Activated CD8-positive, alpha-beta T cell treated with anti-CD3 and anti-CD28 coated beads, Interleukin-2, amount 10 ng/mL, durations not matched to agents 7 days and 5 days (primary cell): ENCODE measurements at regions of chr17 and their contacts with region 1.

Region 1: GRCh38 chr17:64025732-64026294 is 5.4 kb upstream of the ICAM2 start:
- DNase-seq: peak; percentile 96
- ATAC-seq: peak; percentile 89
- H3K4me3 Mint-ChIP-seq: peak overlapping the region; percentile 63
- H3K27ac Mint-ChIP-seq: peak overlapping the region; percentile 86
- H3K4me1 Mint-ChIP-seq: peaks cover 69% of the 10 kb centered on the region
- H3K27me3 Mint-ChIP-seq: no peaks in the 10 kb centered on the region

Region 2: DNA sequence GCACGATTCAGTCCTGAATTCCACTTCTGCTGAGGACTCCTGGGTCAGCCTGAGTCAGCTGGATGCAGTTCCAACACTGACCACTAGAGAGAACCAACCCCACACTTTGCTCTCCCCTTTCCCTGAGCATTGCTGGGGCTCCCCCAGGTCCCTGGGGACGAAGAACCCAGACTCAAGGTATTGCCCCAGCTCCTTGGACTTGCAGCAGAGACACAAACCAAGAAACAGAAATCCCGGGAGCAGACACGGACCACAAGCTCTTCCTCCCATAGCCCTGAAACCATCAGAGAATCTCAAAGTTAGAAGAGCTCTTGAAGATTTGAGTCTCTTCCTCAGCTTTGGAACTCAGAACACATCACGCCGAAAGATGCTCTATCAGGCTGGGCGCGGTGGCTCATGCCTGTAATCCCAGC is 106.5 kb before region 1 on chr17:
- CTCF ChIA-PET with region 1: interaction called, 114 read pairs
- POLR2A ChIA-PET with region 1: no interaction called
- DNase-seq: peak; percentile 79
- ATAC-seq: peak; percentile 93
- H3K4me3 Mint-ChIP-seq: no peak overlapping the region
- H3K27ac Mint-ChIP-seq: peak overlapping the region; percentile 47
- H3K4me1 Mint-ChIP-seq: peaks cover 8% of the 10 kb centered on the region
- H3K27me3 Mint-ChIP-seq: peaks cover 16% of the 10 kb centered on the region

Region 3: DNA sequence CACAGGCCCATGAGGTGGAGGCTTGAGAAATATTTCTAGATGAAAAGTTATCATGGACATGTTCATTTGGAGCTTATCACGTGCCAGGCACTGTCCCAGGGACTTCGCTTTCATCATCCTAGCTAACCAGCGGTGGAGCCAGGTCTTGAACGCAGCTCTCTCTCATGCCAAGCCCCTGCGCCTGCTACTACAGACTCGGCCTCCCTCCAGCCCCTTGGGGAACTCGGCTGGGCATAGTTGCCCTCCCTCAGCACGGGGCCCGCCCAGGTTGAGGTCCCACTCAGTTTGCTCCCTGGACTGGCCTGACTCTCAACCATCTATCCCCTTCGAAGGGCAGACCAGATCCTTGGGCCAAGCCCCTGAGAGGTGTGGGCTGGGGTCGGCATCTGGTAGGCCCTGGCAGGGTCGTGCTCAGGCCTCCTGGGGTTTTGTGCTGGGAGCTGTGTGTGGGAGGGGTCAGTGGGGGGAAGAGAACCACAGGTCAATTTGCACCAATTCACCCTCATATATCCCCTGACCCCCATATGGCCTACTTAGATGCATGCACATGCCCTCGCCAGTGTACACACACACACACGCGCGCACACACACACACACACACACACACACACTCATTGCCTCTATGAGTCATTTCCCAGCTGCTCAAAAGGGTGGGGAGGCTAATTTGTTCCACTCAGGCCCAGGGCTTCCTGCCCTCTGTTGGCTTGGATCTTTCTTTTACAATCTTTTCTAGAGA is 41.0 kb before region 1 on chr17:
- CTCF ChIA-PET with region 1: interaction called, 31 read pairs
- POLR2A ChIA-PET with region 1: interaction called, 4 read pairs
- DNase-seq: peak; percentile 84
- ATAC-seq: peak; percentile 84
- H3K4me3 Mint-ChIP-seq: no peak overlapping the region
- H3K27ac Mint-ChIP-seq: peak overlapping the region; percentile 66
- H3K4me1 Mint-ChIP-seq: peaks cover 23% of the 10 kb centered on the region
- H3K27me3 Mint-ChIP-seq: peaks cover 2% of the 10 kb centered on the region

Region 4: DNA sequence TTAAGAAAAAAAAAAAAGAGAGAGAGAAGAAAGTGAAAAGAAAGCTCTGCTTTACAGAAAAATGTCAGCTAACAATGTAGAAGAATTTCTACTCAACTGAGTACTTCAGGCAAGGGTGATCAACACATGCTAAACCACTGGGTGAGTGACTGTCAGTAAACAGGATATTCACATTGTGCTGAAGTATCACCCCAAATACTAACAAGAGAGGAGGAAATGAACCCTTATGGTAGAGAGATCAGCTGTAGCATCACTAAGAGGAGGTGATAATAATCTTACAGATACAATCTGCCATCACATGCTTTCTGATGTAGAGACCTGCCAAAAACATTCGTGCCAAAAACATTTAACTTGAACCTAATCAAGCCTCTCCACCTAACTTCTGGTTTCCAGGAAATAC is 25.3 kb after region 1 on chr17:
- CTCF ChIA-PET with region 1: interaction called, 30 read pairs
- POLR2A ChIA-PET with region 1: interaction called, 4 read pairs
- DNase-seq: peak; percentile 48
- ATAC-seq: peak; percentile 96
- H3K4me3 Mint-ChIP-seq: peak overlapping the region; percentile 18
- H3K27ac Mint-ChIP-seq: peak overlapping the region; percentile 82
- H3K4me1 Mint-ChIP-seq: peaks cover 37% of the 10 kb centered on the region
- H3K27me3 Mint-ChIP-seq: no peaks in the 10 kb centered on the region

Region 5: DNA sequence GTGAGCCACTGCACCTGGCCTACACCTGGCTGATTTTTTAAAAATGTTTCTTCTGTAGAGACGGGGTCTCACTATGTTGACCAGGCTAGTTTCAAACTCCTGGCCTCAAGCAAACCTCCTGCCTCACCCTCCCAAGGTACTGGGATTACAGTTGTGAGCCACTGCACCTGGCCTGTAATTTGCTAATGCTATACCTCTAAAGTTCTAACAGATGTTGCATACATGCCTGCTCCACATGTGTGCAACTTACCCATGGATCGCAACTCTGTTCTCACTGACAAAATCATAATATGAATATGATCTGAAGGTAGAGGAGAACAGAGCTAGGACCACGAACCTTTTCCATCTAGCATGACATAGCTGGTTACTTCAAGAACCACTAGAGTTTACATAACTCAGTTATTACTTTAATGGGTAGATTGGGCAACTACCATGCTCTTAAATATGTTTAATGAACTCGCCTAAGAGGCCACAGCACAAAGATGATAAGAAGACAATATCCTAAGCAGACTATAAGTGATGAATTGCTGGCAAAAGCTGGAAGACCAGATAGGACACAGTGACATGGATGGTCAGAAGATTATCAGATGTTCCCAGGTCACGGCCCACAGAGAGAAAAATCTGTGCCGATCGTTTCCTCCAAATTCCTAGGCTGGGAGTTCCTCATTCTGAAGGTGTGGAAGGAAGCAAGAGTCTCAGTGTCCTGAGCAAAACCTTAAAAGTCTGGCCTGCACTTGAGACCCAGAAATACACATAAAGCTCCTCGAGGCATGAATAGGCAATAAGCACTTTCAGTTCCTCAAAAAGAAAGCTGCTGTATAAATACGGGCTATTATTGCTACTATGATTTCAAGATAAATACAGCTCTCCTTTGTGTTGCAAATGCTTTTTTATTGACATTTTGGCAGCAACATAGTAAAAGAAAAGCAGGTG is 48.2 kb after region 1 on chr17:
- CTCF ChIA-PET with region 1: interaction called, 14 read pairs
- POLR2A ChIA-PET with region 1: interaction called, 3 read pairs
- DNase-seq: no peak
- ATAC-seq: no peak
- H3K4me3 Mint-ChIP-seq: no peak overlapping the region
- H3K27ac Mint-ChIP-seq: no peak overlapping the region
- H3K4me1 Mint-ChIP-seq: peaks cover 19% of the 10 kb centered on the region
- H3K27me3 Mint-ChIP-seq: no peaks in the 10 kb centered on the region

Region 6: GRCh38 chr17:64145757-64146417 is 120.1 kb after region 1 on chr17:
- CTCF ChIA-PET with region 1: interaction called, 14 read pairs
- POLR2A ChIA-PET with region 1: interaction called, 15 read pairs
- DNase-seq: peak; percentile 98
- ATAC-seq: peak; percentile 96
- H3K4me3 Mint-ChIP-seq: no peak overlapping the region
- H3K27ac Mint-ChIP-seq: no peak overlapping the region
- H3K4me1 Mint-ChIP-seq: peaks cover 26% of the 10 kb centered on the region
- H3K27me3 Mint-ChIP-seq: no peaks in the 10 kb centered on the region